Right ventricle myocardium inferior (tissue), 1 donor: ENCODE measurements at regions of chr6 and their contacts with region 1.

Region 1: GRCh38 chr6:118295336-118295735 is 252.8 kb upstream of the PLN start:
- DNase-seq: no peak
- ATAC-seq: peak; percentile 86

Region 2: GRCh38 chr6:118042855-118043254 is 252.5 kb before region 1 on chr6:
- intact Hi-C with region 1: no loop called
- DNase-seq: no peak
- ATAC-seq: no peak

Region 3: GRCh38 chr6:118101831-118102230 is 193.5 kb before region 1 on chr6:
- intact Hi-C with region 1: no loop called
- DNase-seq: no peak
- ATAC-seq: no peak

Region 4: DNA sequence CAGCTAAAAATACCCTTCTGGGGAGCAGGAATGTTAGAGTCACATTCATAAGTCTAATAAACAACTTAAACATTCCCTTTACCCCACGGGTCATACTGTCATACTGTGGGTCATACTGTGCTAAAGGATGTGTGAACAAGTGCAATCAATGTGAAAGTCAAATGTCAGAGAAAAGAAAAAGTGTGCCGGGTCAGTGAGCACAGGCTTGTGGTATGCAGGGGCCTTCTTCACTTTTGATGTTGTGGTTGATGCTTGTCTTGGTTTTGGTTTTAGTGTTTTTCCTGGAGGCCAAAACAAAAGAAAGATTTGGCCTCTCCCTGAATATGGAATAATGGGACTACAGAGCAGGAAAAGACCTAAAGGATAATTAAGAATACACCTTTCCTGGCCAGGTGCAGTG is 15.1 kb before region 1 on chr6:
- intact Hi-C with region 1: no loop called
- DNase-seq: no peak
- ATAC-seq: no peak

Region 5: GRCh38 chr6:118468682-118469465 is 173.5 kb after region 1 on chr6:
- intact Hi-C with region 1: loop called (anchors 5 kb)
- DNase-seq: no peak
- ATAC-seq: no peak